ENCODE measurements at regions of chr22 and their contacts with region 1.

Region 1: GRCh38 chr22:39170825-39171622 is 18.5 kb upstream of the CBX7 start:
- DNase-seq: peak; percentile 93
- ATAC-seq: peak; percentile 80

Region 2: DNA sequence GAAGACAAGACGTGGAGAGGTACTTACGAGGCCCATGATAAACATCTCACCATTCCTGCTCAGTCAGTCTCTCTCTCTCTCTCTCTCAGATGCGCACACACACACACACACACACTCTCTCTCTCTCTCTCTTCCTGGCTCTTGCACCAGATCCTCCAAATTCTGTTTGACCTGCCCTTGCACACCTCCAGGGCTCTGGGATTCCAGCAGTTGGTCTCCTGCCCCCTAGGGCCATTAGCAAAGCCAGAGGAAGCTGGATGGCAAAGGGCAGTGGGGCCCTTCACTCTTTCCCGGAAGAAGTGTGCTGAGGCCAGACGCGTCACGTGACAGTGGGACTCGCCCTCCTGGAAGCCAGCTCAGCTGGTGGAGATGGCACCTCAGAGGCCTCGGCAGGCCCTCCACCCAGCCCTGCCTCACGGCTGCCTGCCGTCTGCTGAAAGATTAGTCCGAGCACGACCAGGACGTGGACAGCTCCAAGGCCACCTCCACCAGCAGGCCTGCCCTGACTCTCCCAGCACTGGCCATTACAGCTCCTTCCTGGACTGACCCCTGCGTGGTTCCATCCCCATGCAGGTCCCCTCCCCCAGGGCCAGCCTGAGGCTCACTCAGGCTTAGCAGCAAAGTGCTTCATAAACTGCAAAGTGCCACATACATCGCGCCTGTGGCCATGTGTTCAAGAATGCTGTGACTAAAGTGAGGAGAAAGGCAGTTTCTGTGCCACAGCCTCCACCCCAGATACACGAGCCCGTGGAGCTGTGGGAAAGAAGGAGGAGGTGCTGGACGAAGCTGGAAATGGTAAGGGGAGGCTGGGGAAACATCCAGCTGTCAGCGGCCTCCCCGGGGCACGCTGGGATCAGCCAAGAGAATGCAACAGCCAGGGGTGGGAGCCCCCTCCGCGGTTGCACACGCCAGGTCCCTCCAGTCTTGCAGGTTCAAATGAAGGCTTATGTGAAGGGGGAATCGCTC is 70.1 kb after region 1 on chr22:
- intact Hi-C with region 1: loop called (anchors 5 kb)
- DNase-seq: no peak
- ATAC-seq: peak; percentile 39

Region 3: DNA sequence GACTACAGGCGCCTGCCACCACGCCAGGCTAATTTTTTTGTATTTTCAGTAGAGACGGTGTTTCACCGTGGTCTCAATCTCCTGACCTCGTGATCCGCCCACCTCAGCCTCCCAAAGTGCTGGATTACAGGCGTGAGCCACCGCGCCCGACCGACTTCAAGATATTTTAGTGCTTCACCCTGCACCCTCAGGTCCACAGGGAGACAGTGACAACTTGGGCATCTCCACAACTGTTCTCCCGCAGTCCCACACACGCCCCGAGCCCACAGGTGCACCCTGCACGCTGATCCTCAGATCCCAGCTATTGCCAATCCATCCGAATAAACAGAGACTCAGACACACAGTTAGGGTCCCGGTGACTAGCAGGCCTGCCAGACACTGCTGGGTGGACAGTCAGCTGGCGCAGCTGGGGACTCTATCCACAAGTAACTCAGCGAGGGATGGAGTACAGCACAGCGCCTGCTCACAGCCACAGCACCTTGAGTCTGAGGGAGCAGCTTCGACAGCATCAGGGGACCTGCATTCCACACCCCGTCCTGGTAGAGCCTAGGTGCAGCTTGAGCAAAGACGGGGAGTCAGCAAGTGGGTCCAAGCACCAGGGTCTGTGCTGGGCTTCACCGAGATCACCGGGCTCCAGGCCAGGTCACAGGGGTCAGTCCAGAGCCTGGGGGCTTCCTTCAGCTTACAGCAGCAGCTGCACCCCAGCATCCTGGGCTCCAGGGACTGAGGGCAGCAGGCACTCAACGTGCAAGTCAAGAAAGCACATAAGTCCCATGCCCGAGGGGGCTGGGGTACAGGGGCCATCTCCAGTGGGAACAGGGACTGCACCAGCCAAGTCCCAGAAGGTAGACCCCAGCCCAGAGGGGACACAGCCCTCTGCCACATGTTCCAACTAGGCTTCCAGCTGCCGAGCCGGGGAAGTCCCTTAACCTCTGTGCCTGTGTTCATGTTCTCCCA is 140.7 kb after region 1 on chr22:
- intact Hi-C with region 1: loop called (anchors 2 kb)
- DNase-seq: no peak
- ATAC-seq: no peak

Region 4: GRCh38 chr22:39439170-39439569 is 268.1 kb after region 1 on chr22:
- intact Hi-C with region 1: no loop called
- DNase-seq: no peak
- ATAC-seq: no peak

Region 5: DNA sequence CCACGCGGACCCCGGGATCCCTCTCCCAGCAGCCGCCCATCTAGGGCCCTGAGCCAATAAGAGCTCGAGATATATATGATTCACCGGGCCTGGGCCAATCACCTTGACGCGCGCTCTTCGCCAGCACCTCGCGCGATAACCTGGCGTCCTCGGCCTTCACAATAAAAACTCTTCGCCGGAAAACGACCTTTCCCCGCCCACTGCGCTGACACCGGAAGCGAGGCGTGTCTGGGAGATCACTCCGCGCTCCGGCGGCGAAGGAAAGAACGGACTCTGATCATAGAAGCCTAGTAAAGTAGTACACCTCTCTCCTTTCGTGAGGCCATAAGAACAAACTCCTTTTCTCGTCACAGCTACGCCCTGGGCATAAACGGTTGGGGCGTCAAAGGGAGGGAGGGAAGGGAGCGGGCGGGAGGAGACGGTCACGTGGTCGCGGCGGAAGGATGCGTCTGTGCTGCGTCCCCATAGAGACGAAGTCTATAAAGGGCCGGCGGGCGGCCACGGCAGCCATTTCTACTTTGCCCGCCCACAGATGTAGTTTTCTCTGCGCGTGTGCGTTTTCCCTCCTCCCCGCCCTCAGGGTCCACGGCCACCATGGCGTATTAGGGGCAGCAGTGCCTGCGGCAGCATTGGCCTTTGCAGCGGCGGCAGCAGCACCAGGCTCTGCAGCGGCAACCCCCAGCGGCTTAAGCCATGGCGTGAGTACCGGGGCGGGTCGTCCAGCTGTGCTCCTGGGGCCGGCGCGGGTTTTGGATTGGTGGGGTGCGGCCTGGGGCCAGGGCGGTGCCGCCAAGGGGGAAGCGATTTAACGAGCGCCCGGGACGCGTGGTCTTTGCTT is 349.2 kb after region 1 on chr22 and contains the start of gene ATF4:
- intact Hi-C with region 1: loop called (anchors 10 kb)
- DNase-seq: peak; percentile 98
- ATAC-seq: peak; percentile 95
- total RNA-seq, gene ATF4: 319 TPM